ENCODE measurements at regions of chr3 and their contacts with region 1.

Region 1: DNA sequence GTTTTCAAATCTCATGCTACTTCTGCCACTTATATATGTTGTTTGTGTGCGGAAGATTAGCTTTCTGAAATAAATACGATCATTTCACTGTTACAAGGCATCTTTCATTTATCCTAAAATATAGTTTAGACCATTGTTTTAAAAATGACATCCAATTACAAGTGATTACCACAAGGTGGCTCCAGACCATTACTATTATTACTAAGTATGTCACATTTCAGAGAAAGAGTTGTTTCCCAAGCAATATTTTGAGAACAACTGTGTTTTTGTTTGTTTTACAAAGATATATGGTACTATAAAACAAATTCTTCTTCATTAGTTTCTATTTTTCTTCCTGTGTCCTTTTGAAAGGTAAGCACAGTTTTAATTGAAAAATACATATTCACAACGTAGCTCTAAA is 136.0 kb upstream of the RAP2B start:
- DNase-seq: peak; percentile 52
- H3K4me3 ChIP-seq: no peak overlapping the region
- H3K27ac ChIP-seq: no peak overlapping the region
- H3K4me1 ChIP-seq: no peaks in the 10 kb centered on the region
- CTCF ChIP-seq: peak; percentile 91

Region 2: GRCh38 chr3:152817400-152817799 is 208.6 kb before region 1 on chr3:
- CTCF ChIA-PET with region 1: no interaction called
- POLR2A ChIA-PET with region 1: no interaction called
- intact Hi-C with region 1: no loop called
- DNase-seq: no peak
- H3K4me3 ChIP-seq: no peak overlapping the region
- H3K27ac ChIP-seq: no peak overlapping the region
- H3K4me1 ChIP-seq: no peaks in the 10 kb centered on the region
- CTCF ChIP-seq: no peak

Region 3: GRCh38 chr3:154018100-154018696 is 992.2 kb after region 1 on chr3:
- CTCF ChIA-PET with region 1: no interaction called
- POLR2A ChIA-PET with region 1: interaction called, 3 read pairs
- intact Hi-C with region 1: loop called (anchors 5 kb)
- DNase-seq: peak; percentile 51
- H3K4me3 ChIP-seq: no peak overlapping the region
- H3K27ac ChIP-seq: no peak overlapping the region
- H3K4me1 ChIP-seq: no peaks in the 10 kb centered on the region
- CTCF ChIP-seq: peak; percentile 82